ENCODE measurements at regions of chr1 and their contacts with region 1.

Region 1: GRCh38 chr1:155091071-155091709 is 12.6 kb downstream of the EFNA3 start:
- DNase-seq: peak; percentile 84
- H3K4me3 ChIP-seq: no peak overlapping the region
- H3K27ac ChIP-seq: no peak overlapping the region
- H3K4me1 ChIP-seq: peaks cover 12 to 30% (median 21%) of the 10 kb centered on the region in 4 donors
- H3K27me3 ChIP-seq: no peaks in the 10 kb centered on the region
- CTCF ChIP-seq: peak; percentile 97 to 99 (median 99)
- EP300 ChIP-seq: no peak
- POLR2A ChIP-seq: no peak

Region 2: DNA sequence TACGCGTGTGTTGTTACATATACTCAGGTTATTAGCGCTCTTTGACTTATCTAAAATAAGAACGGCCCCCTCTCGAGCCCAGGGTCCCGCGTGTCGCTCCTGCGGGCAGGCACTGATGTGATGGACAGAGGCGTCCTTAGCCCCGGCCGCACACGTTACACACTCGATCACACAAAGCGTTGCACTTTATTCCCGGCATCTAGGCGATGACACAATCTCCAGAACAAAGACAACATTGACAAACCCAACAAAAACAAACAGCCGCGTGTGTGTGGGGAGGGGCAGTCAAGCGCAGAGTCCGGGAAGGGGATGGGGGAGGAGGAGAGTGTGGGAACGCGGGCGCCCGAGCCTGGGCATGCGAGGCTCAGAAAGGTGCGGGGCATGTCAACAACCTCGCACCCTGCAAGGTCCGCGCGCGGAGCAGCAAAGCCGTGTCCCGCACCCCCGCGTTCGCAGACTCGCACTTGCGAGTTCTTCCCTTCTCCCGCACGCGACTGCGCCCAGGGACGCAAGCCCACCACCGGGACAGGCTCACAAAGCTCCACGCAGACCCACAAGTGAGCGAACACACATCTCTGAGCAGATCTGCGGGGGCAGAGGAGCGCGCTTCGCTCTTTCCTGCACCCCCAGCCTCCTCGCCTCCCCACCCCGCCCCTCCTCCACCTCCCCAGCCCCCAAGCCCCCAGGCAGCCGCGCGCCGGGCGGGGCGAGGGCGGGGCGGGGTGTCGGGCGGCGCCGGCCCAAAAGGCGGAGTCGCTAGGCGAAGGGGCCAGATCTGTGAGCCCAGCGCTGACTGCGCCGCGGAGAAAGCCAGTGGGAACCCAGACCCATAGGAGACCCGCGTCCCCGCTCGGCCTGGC is 36.1 kb after region 1 on chr1 and contains the start of gene EFNA1:
- in situ Hi-C with region 1: no loop called
- intact Hi-C with region 1: loop called (anchors 5 kb)
- DNase-seq: peak; percentile 89
- H3K4me3 ChIP-seq: peak within 1 kb of the TSS; percentile 53 to 71 (median 69)
- H3K27ac ChIP-seq: peak within 1 kb of the TSS; percentile 93 to 100 (median 94)
- H3K4me1 ChIP-seq: peaks cover 14 to 86% (median 66%) of the 10 kb centered on the region in 4 donors
- H3K27me3 ChIP-seq: no peaks in the 10 kb centered on the region
- CTCF ChIP-seq: peak in 1 of 5 experiments; percentile 2
- EP300 ChIP-seq: peak; percentile 35
- POLR2A ChIP-seq: peak; percentile 85
- total RNA-seq, gene EFNA1: 18.5 to 108 (median 62.7) TPM

Region 3: GRCh38 chr1:155167166-155168104 is 76.2 kb after region 1 on chr1:
- in situ Hi-C with region 1: loop called (anchors 5 to 10 kb)
- intact Hi-C with region 1: loop called (anchors 2 kb)
- DNase-seq: peak; percentile 94
- H3K4me3 ChIP-seq: no peak overlapping the region
- H3K27ac ChIP-seq: peak overlapping the region in 3 of 4 donors; percentile 28 to 54 (median 46)
- H3K4me1 ChIP-seq: peaks cover 15 to 24% (median 18%) of the 10 kb centered on the region in 4 donors
- H3K27me3 ChIP-seq: no peaks in the 10 kb centered on the region
- CTCF ChIP-seq: peak; percentile 86 to 97 (median 93)
- EP300 ChIP-seq: no peak
- POLR2A ChIP-seq: no peak

Measured in transverse colon (tissue), 4 donors.